CD4-positive, alpha-beta memory T cell (primary cell): ENCODE measurements at regions of chr3 and their contacts with region 1.

Region 1: DNA sequence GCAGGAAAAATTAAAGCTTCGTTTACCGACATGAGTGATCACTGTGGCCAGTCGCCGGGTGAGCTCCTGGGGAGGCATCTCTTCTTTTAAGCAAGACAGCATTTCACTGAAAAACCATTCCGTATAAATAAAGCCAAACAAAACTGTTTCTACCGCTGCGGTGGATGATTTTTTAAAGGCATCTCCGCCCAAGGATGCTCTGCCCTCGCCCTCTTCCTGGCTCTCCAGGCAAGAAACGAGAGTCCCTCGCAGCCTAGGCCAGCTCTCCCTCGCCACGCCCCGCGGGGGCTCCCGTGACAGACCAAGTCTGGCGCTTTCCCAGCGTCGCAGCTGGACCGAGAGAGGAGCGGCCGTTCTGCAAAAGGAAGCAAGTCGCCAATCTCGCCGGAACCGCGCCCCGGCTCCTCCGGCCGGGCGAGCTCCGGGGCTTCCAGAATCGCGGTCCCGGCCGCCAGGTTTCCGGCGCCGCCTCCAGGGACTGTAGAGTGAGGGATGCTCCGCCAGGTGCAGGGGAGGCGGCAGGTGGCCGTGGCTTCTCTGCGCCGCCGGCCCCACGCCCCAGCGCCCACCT is 458 bp downstream of the MCF2L2 start:
- DNase-seq: peak in 2 of 5 donors; percentile 12 to 44
- H3K4me3 ChIP-seq: peak overlapping the region; percentile 71 to 81
- H3K4me3 Mint-ChIP-seq: peak overlapping the region; percentile 84 to 92 (median 88)
- H3K27ac ChIP-seq: peak overlapping the region; percentile 38
- H3K27ac Mint-ChIP-seq: peak overlapping the region in 5 of 7 donors; percentile 46 to 82 (median 54)
- H3K4me1 ChIP-seq: peaks cover 23% of the 10 kb centered on the region
- H3K4me1 Mint-ChIP-seq: peaks cover 24 to 45% (median 32%) of the 10 kb centered on the region in 4 donors
- H3K27me3 ChIP-seq: no peaks in the 10 kb centered on the region
- H3K27me3 Mint-ChIP-seq: peaks cover 0 to 6% of the 10 kb centered on the region in 2 donors

Region 2: DNA sequence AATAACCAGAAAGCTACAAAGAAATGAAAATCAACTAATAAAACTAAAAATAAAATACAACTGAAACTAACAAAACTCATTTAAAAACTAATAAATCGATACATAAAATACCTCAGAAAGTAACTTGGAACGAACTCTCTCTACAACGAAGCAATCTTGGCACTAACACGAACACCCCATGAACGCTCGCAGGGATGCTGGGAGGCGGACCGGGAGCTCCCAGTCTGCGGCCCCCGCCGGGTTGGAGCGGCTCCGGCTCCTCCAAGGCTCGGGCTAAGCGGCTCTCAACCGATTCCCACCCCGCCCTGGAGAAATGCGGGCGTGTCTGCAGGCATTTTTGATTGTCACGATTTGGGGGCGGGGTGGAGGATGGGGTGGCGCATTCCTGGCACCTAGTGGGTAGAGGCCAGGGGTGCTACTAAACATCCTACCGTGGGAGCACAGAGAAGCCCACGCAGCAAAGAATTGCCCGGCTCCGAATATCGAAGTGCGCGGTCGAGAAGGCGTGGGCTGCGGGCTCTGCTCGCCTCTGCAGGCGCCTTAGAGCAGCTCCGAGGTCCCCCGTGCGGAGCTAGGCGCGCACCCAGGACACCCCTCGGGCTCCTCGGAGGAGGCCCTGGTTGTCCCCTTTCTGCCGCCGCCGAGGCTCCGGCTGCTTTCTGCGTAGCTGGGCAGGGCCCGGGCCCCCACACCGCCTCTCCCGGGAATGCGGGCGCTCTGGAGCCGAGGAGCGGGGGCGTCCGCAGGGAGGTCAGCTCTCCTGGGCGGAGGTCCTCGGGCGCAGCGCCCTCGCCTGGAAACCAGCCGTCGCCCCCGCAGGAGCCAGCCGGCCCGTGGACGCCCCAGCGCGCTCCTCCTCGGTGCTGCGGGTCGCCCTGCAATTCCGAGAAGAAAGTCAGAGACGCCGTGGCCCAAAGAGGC is 249.1 kb before region 1 on chr3:
- CTCF ChIA-PET with region 1: no interaction called
- POLR2A ChIA-PET with region 1: no interaction called
- intact Hi-C with region 1: no loop called
- DNase-seq: peak; percentile 16 to 49 (median 23)
- H3K4me3 ChIP-seq: peak overlapping the region in 1 of 2 donors; percentile 45
- H3K4me3 Mint-ChIP-seq: peak overlapping the region; percentile 65 to 85 (median 80)
- H3K27ac ChIP-seq: no peak overlapping the region
- H3K27ac Mint-ChIP-seq: peak overlapping the region in 1 of 7 donors; percentile 29
- H3K4me1 ChIP-seq: peaks cover 15% of the 10 kb centered on the region
- H3K4me1 Mint-ChIP-seq: peaks cover 0 to 5% (median 5%) of the 10 kb centered on the region in 4 donors
- H3K27me3 ChIP-seq: peaks cover 10% of the 10 kb centered on the region
- H3K27me3 Mint-ChIP-seq: peaks cover 10 to 22% of the 10 kb centered on the region in 2 donors

Region 3: DNA sequence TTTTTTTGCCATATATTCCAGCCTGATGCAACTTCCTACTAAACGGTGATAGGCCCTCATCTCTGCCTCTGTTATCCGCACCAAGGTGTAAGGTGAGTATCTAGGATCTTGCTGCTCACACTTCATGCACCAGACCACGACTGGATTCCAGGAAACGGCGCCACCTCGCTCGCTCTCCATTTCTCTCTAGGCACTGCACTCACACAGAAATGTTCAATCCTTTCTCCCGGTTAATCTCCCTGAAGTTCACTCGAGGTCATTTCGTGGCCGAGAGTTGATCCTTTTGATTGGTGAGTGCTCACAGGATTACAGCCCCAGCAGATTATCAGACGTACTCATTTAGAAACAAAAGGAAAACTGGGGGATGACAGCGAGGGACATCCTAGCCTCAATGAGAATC is 27.6 kb before region 1 on chr3:
- CTCF ChIA-PET with region 1: no interaction called
- POLR2A ChIA-PET with region 1: interaction called, 18 read pairs
- intact Hi-C with region 1: no loop called
- DNase-seq: no peak
- H3K4me3 ChIP-seq: no peak overlapping the region
- H3K4me3 Mint-ChIP-seq: no peak overlapping the region
- H3K27ac ChIP-seq: no peak overlapping the region
- H3K27ac Mint-ChIP-seq: peak overlapping the region in 1 of 7 donors; percentile 47
- H3K4me1 ChIP-seq: peaks cover 18% of the 10 kb centered on the region
- H3K4me1 Mint-ChIP-seq: peaks cover 7 to 16% (median 11%) of the 10 kb centered on the region in 4 donors
- H3K27me3 ChIP-seq: no peaks in the 10 kb centered on the region
- H3K27me3 Mint-ChIP-seq: peaks cover 0 to 1% of the 10 kb centered on the region in 2 donors

Region 4: DNA sequence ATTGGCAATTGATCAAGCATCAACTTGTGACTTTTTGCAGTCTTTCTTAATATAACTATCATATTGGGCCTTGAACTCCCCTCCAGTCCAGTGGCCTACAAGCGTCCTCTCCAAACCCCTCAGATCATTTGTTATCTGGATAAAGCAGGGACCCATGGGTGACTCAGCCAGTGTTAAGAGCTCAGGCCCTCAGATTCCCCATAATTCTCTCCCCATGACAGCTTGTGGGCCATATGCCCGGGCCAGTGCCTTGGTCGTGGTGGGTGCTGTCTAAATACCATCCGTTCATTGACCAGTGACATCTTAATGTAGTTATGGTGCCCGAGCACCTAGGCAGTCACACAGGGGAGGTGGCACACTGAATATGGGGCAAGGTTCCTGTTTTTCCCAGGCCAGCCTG is 17.7 kb before region 1 on chr3:
- CTCF ChIA-PET with region 1: interaction called, 8 read pairs
- POLR2A ChIA-PET with region 1: interaction called, 20 read pairs
- intact Hi-C with region 1: no loop called
- DNase-seq: no peak
- H3K4me3 ChIP-seq: no peak overlapping the region
- H3K4me3 Mint-ChIP-seq: no peak overlapping the region
- H3K27ac ChIP-seq: no peak overlapping the region
- H3K27ac Mint-ChIP-seq: peak overlapping the region in 1 of 7 donors; percentile 42
- H3K4me1 ChIP-seq: peaks cover 7% of the 10 kb centered on the region
- H3K4me1 Mint-ChIP-seq: peaks cover 0 to 7% (median under 1%) of the 10 kb centered on the region in 4 donors
- H3K27me3 ChIP-seq: no peaks in the 10 kb centered on the region
- H3K27me3 Mint-ChIP-seq: no peaks in the 10 kb centered on the region

Region 5: DNA sequence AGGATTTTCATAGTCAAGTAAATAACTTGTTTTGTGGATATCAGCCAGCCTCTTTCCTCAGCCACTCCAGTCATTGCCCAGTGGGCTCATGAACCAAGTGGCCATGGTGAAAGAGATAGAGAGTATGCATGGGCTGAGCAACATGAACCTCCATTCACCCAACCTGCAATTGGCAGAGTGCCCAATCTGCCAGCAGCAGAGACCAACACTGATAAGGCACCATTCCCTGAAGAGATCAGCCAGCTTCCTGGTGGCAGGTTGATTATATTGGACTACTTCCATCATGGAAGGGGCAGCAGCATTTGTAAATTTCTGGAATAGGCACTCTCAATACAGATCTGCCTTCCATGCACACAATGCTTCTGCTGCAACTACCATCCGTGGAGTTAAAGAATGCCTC is 10.8 kb after region 1 on chr3:
- CTCF ChIA-PET with region 1: no interaction called
- POLR2A ChIA-PET with region 1: interaction called, 16 read pairs
- intact Hi-C with region 1: no loop called
- DNase-seq: no peak
- H3K4me3 ChIP-seq: no peak overlapping the region
- H3K4me3 Mint-ChIP-seq: no peak overlapping the region
- H3K27ac ChIP-seq: no peak overlapping the region
- H3K27ac Mint-ChIP-seq: no peak overlapping the region
- H3K4me1 ChIP-seq: peaks cover 20% of the 10 kb centered on the region
- H3K4me1 Mint-ChIP-seq: peaks cover 6 to 26% (median 10%) of the 10 kb centered on the region in 4 donors
- H3K27me3 ChIP-seq: no peaks in the 10 kb centered on the region
- H3K27me3 Mint-ChIP-seq: no peaks in the 10 kb centered on the region

Region 6: DNA sequence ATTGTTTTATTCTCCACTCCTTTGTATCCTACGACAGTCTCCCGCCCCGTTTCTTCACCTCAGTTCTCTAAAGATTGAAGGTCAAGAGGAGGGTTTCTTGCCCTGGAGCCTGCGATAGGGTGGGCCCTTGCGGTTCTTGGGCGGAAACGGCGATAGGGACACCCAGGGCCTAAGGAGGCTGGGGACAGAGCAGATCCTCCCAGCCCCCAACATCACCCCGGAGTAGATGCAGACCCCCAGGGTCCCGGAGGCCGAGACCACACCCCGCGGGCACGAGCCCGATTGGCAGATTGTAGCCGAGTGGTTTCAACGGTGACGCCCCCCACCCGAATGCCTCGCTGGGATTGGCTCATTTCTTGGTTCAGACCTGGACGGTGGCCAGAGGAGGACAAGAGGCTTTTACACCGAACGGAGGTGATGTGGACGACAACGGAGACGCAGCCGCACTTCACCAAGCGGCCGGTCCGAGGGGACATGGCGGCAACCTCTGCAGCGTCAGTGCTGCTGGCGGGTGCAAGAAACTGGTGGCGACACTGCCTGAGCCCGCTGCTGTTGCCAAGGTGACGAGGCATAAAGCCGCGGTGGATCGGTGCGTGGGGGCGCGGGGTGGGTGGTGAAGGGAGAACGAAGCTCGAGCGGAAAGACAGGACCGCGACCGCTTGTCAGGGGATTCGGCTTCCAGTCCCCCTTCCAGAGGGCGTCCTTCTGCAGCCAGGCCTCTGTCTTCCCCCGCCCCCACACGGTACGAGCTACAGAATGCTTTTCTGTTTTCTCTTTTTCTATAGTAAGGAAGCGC is 19.4 kb after region 1 on chr3:
- CTCF ChIA-PET with region 1: interaction called, 3 read pairs
- POLR2A ChIA-PET with region 1: interaction called, 17 read pairs
- intact Hi-C with region 1: no loop called
- DNase-seq: peak; percentile 61 to 74 (median 64)
- H3K4me3 ChIP-seq: peak overlapping the region; percentile 33 to 80
- H3K4me3 Mint-ChIP-seq: peak overlapping the region; percentile 90 to 98 (median 96)
- H3K27ac ChIP-seq: peak overlapping the region; percentile 55
- H3K27ac Mint-ChIP-seq: peak overlapping the region; percentile 80 to 94 (median 91)
- H3K4me1 ChIP-seq: peaks cover 20% of the 10 kb centered on the region
- H3K4me1 Mint-ChIP-seq: peaks cover 12 to 31% (median 15%) of the 10 kb centered on the region in 4 donors
- H3K27me3 ChIP-seq: no peaks in the 10 kb centered on the region
- H3K27me3 Mint-ChIP-seq: no peaks in the 10 kb centered on the region